ENCODE measurements at regions of chr1 and their contacts with region 1.

Region 1: DNA sequence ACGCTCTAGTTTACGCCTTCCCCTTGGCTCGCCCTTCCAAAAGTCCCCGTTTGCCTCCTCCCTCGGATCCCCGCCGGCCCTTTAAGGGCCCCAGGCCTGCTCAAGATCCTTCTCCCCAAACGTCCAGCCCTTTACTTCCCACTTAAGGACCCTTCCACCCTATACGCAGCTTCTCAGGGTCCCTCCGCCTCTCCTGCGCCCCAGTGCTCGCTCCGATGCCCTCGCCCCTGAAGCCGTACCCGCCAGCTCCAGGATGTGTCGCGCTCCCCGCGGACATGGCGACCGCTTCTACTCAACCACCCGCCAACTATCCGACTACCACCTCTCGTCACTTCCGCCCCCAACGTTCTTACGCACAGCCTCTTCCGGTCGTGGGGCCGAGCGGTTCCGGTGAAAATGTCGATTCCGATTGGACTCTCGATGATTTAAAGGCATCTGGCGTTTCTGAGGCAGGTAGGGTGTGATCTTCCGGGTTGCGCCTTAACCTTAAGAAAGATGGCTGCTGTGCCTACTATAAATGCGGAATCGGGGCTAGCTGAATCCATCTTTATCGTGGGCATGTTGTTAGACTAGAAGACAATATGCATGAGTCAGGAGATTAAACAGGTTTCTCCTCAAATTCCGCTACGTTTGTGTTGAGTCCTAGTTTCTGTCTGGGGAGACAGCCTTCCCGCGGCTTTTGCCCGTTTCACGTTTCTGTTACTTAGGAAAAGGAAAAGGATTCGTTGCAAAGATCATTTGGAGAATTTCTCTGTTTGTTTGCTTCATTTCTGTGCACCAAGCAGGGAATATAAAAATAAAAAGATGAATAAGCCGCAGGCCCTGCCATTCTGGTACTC is at the start of gene KHDC4:
- DNase-seq: peak; percentile 98
- ATAC-seq: peak; percentile 93
- H3K4me3 ChIP-seq: peak within 1 kb of the TSS; percentile 79 to 97 (median 84)
- H3K4me3 Mint-ChIP-seq: no peak within 1 kb of the TSS
- H3K27ac ChIP-seq: peak within 1 kb of the TSS; percentile 86 to 89
- H3K27ac Mint-ChIP-seq: peak within 1 kb of the TSS; percentile 54
- H3K4me1 ChIP-seq: peaks cover 43 to 55% of the 10 kb centered on the region in 2 donors
- H3K4me1 Mint-ChIP-seq: peaks cover 37% of the 10 kb centered on the region
- H3K27me3 ChIP-seq: no peaks in the 10 kb centered on the region
- H3K27me3 Mint-ChIP-seq: no peaks in the 10 kb centered on the region
- CTCF ChIP-seq: peak; percentile 57
- total RNA-seq, gene KHDC4: 122 TPM in 2 replicates

Region 2: DNA sequence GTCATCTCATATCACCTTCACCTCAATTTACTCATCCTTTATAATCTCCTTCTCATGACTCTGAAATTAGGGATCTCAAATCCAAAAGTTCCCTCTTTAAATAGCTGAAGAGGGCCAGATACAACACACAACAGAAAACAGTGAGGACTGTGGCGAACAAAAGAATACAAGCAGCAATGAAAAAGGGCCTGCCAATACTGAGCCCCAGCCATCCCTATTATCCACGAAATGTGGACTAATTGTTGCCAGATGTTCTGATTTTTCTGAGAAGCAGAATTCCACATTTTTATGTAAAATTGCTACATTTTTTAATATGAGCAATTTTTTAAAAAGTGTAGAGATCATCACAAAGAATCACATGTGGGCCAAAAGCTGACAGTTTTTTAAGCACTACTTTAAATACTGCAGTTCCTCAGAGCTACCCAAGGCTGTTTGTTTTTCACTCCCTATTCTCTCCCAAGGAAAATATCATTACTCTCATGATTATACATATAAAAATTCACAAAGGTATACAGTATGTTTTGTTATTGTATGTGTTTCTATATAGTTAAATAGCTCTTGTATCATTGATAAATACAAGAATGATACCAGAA is 461.7 kb before region 1 on chr1:
- CTCF ChIA-PET with region 1: no interaction called
- POLR2A ChIA-PET with region 1: no interaction called
- intact Hi-C with region 1: no loop called
- DNase-seq: no peak
- ATAC-seq: no peak
- H3K4me3 ChIP-seq: no peak overlapping the region
- H3K4me3 Mint-ChIP-seq: no peak overlapping the region
- H3K27ac ChIP-seq: no peak overlapping the region
- H3K27ac Mint-ChIP-seq: no peak overlapping the region
- H3K4me1 ChIP-seq: no peaks in the 10 kb centered on the region
- H3K4me1 Mint-ChIP-seq: peaks cover 14% of the 10 kb centered on the region
- H3K27me3 ChIP-seq: no peaks in the 10 kb centered on the region
- H3K27me3 Mint-ChIP-seq: no peaks in the 10 kb centered on the region
- CTCF ChIP-seq: no peak

Region 3: GRCh38 chr1:155911156-155912055 is 22.9 kb before region 1 on chr1 and contains the start of gene RIT1:
- CTCF ChIA-PET with region 1: interaction called, 8 read pairs
- POLR2A ChIA-PET with region 1: no interaction called
- intact Hi-C with region 1: loop called (anchors 1 kb)
- DNase-seq: peak; percentile 91
- ATAC-seq: peak; percentile 98
- H3K4me3 ChIP-seq: peak within 1 kb of the TSS; percentile 64 to 90 (median 71)
- H3K4me3 Mint-ChIP-seq: peak within 1 kb of the TSS; percentile 96
- H3K27ac ChIP-seq: peak within 1 kb of the TSS; percentile 59 to 79
- H3K27ac Mint-ChIP-seq: peak within 1 kb of the TSS; percentile 97
- H3K4me1 ChIP-seq: peaks cover 14 to 16% of the 10 kb centered on the region in 2 donors
- H3K4me1 Mint-ChIP-seq: peaks cover 23% of the 10 kb centered on the region
- H3K27me3 ChIP-seq: no peaks in the 10 kb centered on the region
- H3K27me3 Mint-ChIP-seq: no peaks in the 10 kb centered on the region
- CTCF ChIP-seq: no peak
- total RNA-seq, gene RIT1: 43.4 and 45.7 TPM in 2 replicates

Region 4: DNA sequence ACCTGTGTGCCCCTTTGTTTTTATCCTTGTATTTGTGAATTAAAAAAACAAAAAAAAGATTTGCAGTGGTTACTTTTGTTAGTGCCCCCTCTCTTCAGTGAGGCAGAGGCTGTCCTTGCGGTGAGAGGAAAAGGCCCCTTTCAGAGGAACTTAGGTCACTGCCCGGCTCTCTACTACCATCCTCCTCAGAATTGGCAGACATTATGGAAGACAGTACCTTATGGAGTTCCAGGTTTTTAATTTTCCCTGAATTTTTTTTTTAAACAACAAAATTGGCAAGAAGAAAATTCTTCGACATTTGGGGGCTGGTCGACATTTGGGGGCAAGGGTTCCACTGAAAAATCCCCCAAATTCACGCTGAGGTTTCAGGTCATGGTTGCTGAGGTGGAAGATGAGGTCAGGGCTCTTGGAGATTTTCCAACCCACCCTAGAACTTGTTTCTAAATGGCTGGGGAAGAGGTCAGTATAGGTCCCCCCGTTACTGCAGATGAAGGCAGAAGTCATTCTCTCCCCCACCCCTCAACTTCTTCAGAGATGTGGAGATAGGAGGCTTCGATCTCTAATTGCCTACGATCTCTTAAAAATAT is 12.4 kb after region 1 on chr1:
- CTCF ChIA-PET with region 1: interaction called, 27 read pairs
- POLR2A ChIA-PET with region 1: interaction called, 33 read pairs
- intact Hi-C with region 1: loop called (anchors 1 kb)
- DNase-seq: no peak
- ATAC-seq: peak; percentile 11
- H3K4me3 ChIP-seq: peak overlapping the region in 1 of 5 experiments; percentile 4
- H3K4me3 Mint-ChIP-seq: peak overlapping the region; percentile 9
- H3K27ac ChIP-seq: peak overlapping the region; percentile 76 to 89
- H3K27ac Mint-ChIP-seq: peak overlapping the region; percentile 92
- H3K4me1 ChIP-seq: peaks cover 55 to 60% of the 10 kb centered on the region in 2 donors
- H3K4me1 Mint-ChIP-seq: peaks cover 56% of the 10 kb centered on the region
- H3K27me3 ChIP-seq: no peaks in the 10 kb centered on the region
- H3K27me3 Mint-ChIP-seq: no peaks in the 10 kb centered on the region
- CTCF ChIP-seq: no peak

Region 5: GRCh38 chr1:155970531-155971167 is 36.3 kb after region 1 on chr1:
- CTCF ChIA-PET with region 1: interaction called, 206 read pairs
- POLR2A ChIA-PET with region 1: interaction called, 27 read pairs
- intact Hi-C with region 1: no loop called
- DNase-seq: peak; percentile 79
- ATAC-seq: peak; percentile 95
- H3K4me3 ChIP-seq: peak overlapping the region in 4 of 5 experiments; percentile 6 to 34 (median 22)
- H3K4me3 Mint-ChIP-seq: peak overlapping the region; percentile 79
- H3K27ac ChIP-seq: peak overlapping the region; percentile 41 to 79
- H3K27ac Mint-ChIP-seq: peak overlapping the region; percentile 91
- H3K4me1 ChIP-seq: peaks cover 87 to 99% of the 10 kb centered on the region in 2 donors
- H3K4me1 Mint-ChIP-seq: peaks cover 95% of the 10 kb centered on the region
- H3K27me3 ChIP-seq: no peaks in the 10 kb centered on the region
- H3K27me3 Mint-ChIP-seq: no peaks in the 10 kb centered on the region
- CTCF ChIP-seq: no peak

Region 6: DNA sequence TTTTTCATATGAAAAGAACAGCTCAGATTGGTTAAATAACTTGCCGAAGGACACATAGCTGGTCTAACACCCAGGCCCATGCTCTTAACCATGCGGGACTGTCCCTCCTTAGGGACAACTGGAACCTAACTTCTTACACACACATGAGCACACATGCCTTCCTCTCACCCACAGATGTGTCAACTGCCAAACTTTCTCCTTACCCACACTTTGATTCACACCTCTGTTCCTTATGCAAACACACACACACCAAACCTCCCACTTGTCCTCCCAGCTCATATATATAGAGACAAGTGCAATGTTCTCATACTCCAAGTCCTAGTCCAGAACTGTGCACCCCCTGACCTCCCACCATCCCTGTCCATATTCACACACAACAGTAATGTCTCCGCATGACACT is 130.9 kb after region 1 on chr1:
- CTCF ChIA-PET with region 1: interaction called, 15 read pairs
- POLR2A ChIA-PET with region 1: no interaction called
- intact Hi-C with region 1: loop called (anchors 5 kb)
- DNase-seq: no peak
- ATAC-seq: no peak
- H3K4me3 ChIP-seq: no peak overlapping the region
- H3K4me3 Mint-ChIP-seq: no peak overlapping the region
- H3K27ac ChIP-seq: no peak overlapping the region
- H3K27ac Mint-ChIP-seq: no peak overlapping the region
- H3K4me1 ChIP-seq: no peaks in the 10 kb centered on the region
- H3K4me1 Mint-ChIP-seq: no peaks in the 10 kb centered on the region
- H3K27me3 ChIP-seq: peaks cover 0 to 4% (median 0%) of the 10 kb centered on the region in 4 experiments
- H3K27me3 Mint-ChIP-seq: no peaks in the 10 kb centered on the region
- CTCF ChIP-seq: no peak

Measured in B cell (primary cell).